Lower leg skin (tissue), 4 donors: ENCODE measurements at regions of chr11 and their contacts with region 1.

Region 1: DNA sequence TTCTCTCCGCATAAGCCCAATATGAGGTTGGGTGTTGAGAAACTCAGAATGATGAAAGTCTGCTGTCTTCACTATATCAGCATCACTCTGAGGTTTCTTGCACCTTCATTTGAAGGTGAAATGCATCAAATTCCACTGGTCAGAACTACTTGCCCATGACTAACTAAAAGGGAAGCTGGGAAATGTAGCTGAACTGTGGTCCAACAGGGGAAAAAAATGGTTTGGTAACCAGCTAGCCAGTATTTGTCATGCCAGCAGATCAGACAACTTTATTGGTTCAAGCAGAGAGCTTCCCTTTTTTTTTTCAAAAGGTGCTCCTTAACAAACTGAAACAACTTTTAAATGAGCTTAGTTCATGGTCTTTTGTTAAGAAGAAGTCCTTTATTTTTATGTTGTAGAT is 14.2 kb upstream of the PIK3C2A start:
- DNase-seq: no peak
- H3K4me3 ChIP-seq: no peak overlapping the region
- CTCF ChIP-seq: no peak
- POLR2A ChIP-seq: no peak

Region 2: DNA sequence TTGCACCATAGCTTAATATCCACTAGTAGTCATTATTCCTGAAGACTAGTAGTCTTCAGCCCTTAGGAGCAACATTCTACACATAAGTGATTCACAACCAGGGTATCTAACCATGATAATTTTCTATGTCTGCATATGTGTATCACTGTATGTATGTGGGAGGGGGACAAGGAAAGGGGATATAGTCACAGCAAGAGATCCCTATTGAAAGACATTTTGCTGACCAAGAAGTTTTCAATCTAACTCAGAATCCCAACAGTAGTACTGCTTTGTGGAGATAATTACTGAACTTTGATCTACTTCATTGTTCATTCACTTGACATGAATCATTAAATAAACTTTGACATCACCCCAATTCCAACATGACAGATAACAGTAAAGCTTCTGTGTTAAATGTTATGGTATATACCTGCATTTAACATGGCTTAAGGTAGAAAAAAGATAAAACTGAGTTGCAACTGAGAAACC is 24.5 kb before region 1 on chr11:
- intact Hi-C with region 1: no loop called
- DNase-seq: no peak
- H3K4me3 ChIP-seq: no peak overlapping the region
- CTCF ChIP-seq: no peak
- POLR2A ChIP-seq: no peak

Region 3: GRCh38 chr11:17384002-17384511 is 162.1 kb after region 1 on chr11:
- intact Hi-C with region 1: loop called (anchors 10 kb)
- DNase-seq: peak; percentile 43 to 95
- H3K4me3 ChIP-seq: no peak overlapping the region
- CTCF ChIP-seq: no peak
- POLR2A ChIP-seq: no peak

Region 4: DNA sequence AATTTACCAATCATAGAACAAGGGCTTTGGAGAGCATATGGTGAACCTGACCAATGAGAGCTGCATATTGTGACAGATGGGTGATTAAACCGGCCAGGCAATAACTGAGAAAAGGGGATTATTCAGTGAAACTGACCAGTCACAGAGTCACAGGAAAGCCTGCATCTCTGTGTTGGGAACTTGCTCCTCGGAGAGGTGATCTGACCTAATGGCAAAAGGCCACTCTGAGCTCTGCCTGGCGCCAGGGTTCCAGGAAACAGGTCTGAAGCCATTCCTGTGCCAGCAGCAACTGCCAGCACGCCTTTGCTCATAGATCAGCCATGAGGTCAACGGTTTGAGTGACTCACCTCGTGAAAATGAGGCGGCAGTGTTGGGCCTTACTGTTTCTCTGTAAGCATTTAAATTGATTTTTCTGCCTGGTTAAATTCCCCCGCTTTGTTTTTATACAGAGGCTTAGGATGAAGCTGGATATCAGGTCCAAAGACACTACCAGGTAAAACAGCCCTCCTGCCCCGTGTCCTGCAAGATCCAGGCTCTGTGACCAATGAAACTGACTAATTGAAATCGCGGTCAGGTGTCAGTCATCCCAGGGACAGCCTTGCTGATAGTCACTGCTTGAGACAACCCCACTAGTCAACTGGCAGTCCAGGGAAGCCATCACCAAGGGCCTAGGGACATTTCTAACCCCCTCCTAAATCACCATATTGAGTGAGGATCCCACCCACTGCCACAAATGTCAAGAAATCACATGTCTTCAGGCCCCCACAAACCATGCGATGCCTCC is 461.6 kb after region 1 on chr11:
- intact Hi-C with region 1: loop called (anchors 10 kb)
- DNase-seq: no peak
- H3K4me3 ChIP-seq: no peak overlapping the region
- CTCF ChIP-seq: no peak
- POLR2A ChIP-seq: no peak